ENCODE measurements at regions of chr2 and their contacts with region 1.

Region 1: GRCh38 chr2:9813312-9814133 is 29.8 kb upstream of the TAF1B start:
- DNase-seq: no peak
- ATAC-seq: peak; percentile 79

Region 2: GRCh38 chr2:10097352-10098148 is 284.0 kb after region 1 on chr2:
- intact Hi-C with region 1: loop called (anchors 5 kb)
- DNase-seq: peak; percentile 84
- ATAC-seq: peak; percentile 93